Activated CD4-positive, alpha-beta T cell treated with anti-CD3 and anti-CD28 coated beads, Interleukin-2, amount 10 ng/mL, durations not matched to agents 7 days and 5 days (primary cell): ENCODE measurements at regions of chr10 and their contacts with region 1.

Region 1: DNA sequence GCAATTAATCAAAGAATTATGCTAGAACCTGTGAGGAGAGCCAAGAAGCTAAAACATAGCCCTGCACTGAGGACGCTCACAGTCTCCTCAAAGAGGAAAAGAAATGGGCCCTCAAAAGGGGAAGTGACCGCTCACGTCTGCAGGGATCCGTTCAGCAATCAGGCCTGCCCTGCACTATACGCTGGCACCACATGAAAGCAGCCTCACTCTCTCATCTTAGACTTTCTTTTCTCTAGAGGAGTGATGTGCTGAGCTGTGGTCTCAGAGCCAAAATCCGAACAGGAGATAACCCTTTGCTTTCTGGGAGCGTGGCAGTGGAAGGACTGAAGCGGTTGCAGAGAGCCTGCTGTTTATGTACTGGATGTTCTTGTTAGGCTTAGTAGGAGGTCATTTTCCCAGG is 6.3 kb upstream of the IL2RA start:
- DNase-seq: peak; percentile 79
- H3K4me3 Mint-ChIP-seq: peak overlapping the region; percentile 71
- H3K27ac Mint-ChIP-seq: peak overlapping the region; percentile 97
- H3K4me1 Mint-ChIP-seq: peaks cover 94% of the 10 kb centered on the region
- H3K27me3 Mint-ChIP-seq: no peaks in the 10 kb centered on the region

Region 2: GRCh38 chr10:5910323-5911100 is 157.9 kb before region 1 on chr10:
- CTCF ChIA-PET with region 1: no interaction called
- POLR2A ChIA-PET with region 1: no interaction called
- DNase-seq: no peak
- H3K4me3 Mint-ChIP-seq: no peak overlapping the region
- H3K27ac Mint-ChIP-seq: no peak overlapping the region
- H3K4me1 Mint-ChIP-seq: peaks cover 16% of the 10 kb centered on the region
- H3K27me3 Mint-ChIP-seq: no peaks in the 10 kb centered on the region

Region 3: DNA sequence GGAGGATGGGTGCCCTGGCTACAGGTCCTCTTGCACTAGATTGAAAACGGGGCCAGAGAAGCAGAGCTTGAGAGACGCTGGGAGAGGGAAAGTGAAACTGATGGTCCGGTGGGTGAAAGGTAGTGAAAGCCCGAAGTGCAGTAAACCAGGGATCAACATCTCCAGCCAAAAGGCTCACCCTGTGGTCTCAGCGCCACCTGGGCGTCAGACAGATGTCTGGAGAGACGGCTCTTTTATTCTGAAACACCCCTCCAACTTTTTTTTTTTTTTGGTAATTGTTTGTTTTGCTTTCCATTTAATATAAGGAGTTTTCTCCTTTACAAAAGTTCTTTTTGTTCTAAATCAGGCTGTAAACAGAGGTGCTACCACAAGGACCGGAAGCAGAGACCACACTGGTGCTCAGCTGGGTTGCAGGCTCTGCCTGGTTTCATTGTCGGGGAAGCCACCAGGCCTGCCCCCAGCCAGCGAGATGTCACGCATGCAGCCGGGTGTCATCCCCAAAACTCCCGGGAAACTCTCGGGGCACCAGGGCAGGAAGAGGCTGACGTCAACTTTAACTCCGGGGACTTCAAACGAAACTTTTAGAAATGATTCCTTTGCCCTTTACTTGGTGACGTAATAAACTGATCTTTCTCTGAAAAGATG is 17.5 kb before region 1 on chr10:
- CTCF ChIA-PET with region 1: interaction called, 10 read pairs
- POLR2A ChIA-PET with region 1: interaction called, 4 read pairs
- DNase-seq: peak; percentile 96
- H3K4me3 Mint-ChIP-seq: peak overlapping the region; percentile 84
- H3K27ac Mint-ChIP-seq: peak overlapping the region; percentile 98
- H3K4me1 Mint-ChIP-seq: peaks cover 86% of the 10 kb centered on the region
- H3K27me3 Mint-ChIP-seq: no peaks in the 10 kb centered on the region

Region 4: GRCh38 chr10:6195846-6196245 is 127.4 kb after region 1 on chr10:
- CTCF ChIA-PET with region 1: no interaction called
- POLR2A ChIA-PET with region 1: no interaction called
- DNase-seq: no peak
- H3K4me3 Mint-ChIP-seq: peak overlapping the region; percentile 4
- H3K27ac Mint-ChIP-seq: no peak overlapping the region
- H3K4me1 Mint-ChIP-seq: peaks cover 48% of the 10 kb centered on the region
- H3K27me3 Mint-ChIP-seq: no peaks in the 10 kb centered on the region